Caco-2 (cell line): ENCODE measurements at regions of chr13 and their contacts with region 1.

Region 1: DNA sequence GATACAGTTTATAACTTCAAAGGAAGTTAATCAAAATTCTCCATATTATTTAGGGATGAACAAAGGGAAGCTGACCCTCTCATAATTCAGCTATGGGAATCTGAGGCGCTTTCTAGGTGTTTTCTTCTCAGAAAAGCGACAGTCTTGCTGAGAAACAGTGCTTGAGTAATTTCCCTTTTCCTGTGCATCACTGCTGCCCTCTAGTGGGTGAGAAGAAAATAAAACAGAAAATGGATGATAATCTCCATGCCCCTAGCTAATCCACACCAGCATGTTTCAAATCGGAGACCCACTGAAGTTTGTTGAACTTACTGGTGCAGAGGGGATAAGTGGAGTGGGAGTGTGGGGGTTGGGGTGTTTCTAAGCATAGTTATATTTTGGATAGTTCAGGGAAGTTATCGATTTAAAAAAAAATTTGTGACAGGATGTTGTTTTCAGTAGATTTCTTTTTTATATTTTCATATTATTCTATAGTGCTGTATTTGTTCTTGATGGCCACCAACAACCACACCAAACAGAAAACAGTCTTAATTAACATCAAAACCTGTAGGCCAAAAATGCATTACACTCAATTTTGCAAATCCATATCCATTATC is 21.4 kb downstream of the LCP1 start:
- DNase-seq: peak in 1 of 2 experiments; percentile 57
- H3K4me3 ChIP-seq: no peak overlapping the region
- H3K4me3 Mint-ChIP-seq: no peak overlapping the region
- H3K27ac Mint-ChIP-seq: no peak overlapping the region
- H3K4me1 ChIP-seq: no peaks in the 10 kb centered on the region
- H3K4me1 Mint-ChIP-seq: no peaks in the 10 kb centered on the region
- H3K27me3 ChIP-seq: no peaks in the 10 kb centered on the region
- H3K27me3 Mint-ChIP-seq: peaks cover 5% of the 10 kb centered on the region
- CTCF ChIP-seq: peak; percentile 77 to 91

Region 2: DNA sequence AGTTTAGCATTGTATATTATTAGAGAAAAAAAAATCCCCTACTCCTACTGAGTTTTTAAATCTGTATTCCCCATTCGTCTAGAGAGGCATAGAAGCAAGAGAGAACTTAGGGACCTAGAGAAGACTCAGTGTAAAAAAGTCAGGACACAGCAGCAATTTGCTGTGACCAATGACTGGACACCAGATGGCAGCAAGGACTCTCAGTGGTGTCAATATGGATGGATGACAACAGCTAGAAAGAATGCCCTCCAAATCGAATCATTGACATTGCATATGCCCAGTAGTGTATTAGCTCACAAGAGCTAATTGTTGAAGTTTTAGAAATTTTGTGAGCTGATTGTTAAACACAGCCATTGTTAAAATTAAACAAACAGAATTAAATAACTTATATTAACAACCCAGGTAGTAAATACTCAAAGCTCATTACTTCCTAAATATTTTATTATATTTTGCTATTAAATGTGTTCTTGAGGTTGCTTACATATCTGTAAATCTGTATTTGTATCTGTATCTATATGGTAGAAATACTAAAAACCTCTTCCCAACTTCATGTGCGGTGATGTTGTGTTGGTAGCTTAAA is 353.0 kb before region 1 on chr13:
- CTCF ChIA-PET with region 1: interaction called, 4 read pairs
- POLR2A ChIA-PET with region 1: no interaction called
- intact Hi-C with region 1: loop called (anchors 1 kb)
- DNase-seq: peak; percentile 61 to 63
- H3K4me3 ChIP-seq: no peak overlapping the region
- H3K4me3 Mint-ChIP-seq: no peak overlapping the region
- H3K27ac Mint-ChIP-seq: no peak overlapping the region
- H3K4me1 ChIP-seq: no peaks in the 10 kb centered on the region
- H3K4me1 Mint-ChIP-seq: no peaks in the 10 kb centered on the region
- H3K27me3 ChIP-seq: peaks cover 1% of the 10 kb centered on the region; the same call in 1 of the 2 replicates
- H3K27me3 Mint-ChIP-seq: peaks cover 9% of the 10 kb centered on the region
- CTCF ChIP-seq: peak; percentile 60 to 82

Region 3: GRCh38 chr13:46097015-46097644 is 63.4 kb before region 1 on chr13:
- CTCF ChIA-PET with region 1: no interaction called
- POLR2A ChIA-PET with region 1: no interaction called
- intact Hi-C with region 1: no loop called
- DNase-seq: no peak
- H3K4me3 ChIP-seq: no peak overlapping the region
- H3K4me3 Mint-ChIP-seq: no peak overlapping the region
- H3K27ac Mint-ChIP-seq: no peak overlapping the region
- H3K4me1 ChIP-seq: no peaks in the 10 kb centered on the region
- H3K4me1 Mint-ChIP-seq: peaks cover 6% of the 10 kb centered on the region
- H3K27me3 ChIP-seq: no peaks in the 10 kb centered on the region
- H3K27me3 Mint-ChIP-seq: peaks cover 10% of the 10 kb centered on the region
- CTCF ChIP-seq: no peak

Region 4: GRCh38 chr13:46126552-46127357 is 33.8 kb before region 1 on chr13:
- CTCF ChIA-PET with region 1: interaction called, 16 read pairs
- POLR2A ChIA-PET with region 1: no interaction called
- intact Hi-C with region 1: loop called (anchors 1 kb)
- DNase-seq: peak; percentile 74 to 83
- H3K4me3 ChIP-seq: no peak overlapping the region
- H3K4me3 Mint-ChIP-seq: no peak overlapping the region
- H3K27ac Mint-ChIP-seq: no peak overlapping the region
- H3K4me1 ChIP-seq: peaks cover 12% of the 10 kb centered on the region
- H3K4me1 Mint-ChIP-seq: peaks cover 7% of the 10 kb centered on the region
- H3K27me3 ChIP-seq: no peaks in the 10 kb centered on the region
- H3K27me3 Mint-ChIP-seq: no peaks in the 10 kb centered on the region
- CTCF ChIP-seq: peak; percentile 88 to 93

Region 5: DNA sequence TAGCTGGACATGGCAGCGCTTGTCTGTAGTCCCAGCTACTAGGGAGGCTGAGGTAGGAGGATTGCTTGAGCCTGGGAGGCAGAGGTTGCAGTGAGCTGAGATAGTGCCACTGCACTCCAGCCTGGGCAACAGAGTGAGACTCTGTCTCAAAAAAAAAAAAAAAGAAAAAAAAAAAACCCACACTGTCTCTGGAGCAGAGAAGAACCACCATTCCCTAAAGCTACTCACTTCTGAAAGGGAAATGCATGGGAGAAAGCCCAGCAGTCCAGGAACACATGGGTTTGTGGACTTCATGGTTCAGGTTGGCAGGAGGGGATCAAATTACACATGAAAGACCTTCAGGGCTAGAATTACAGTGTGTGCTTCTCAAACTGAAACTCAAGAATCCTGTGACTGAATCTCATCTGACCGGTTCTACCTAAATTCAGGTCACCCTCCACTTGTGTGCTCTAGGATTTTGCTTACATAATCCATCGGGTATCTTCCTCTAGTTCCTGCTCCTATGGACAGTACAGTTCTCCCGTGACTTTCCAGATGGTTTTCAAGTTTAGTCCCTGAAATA is 25.5 kb before region 1 on chr13:
- CTCF ChIA-PET with region 1: interaction called, 4 read pairs
- POLR2A ChIA-PET with region 1: no interaction called
- intact Hi-C with region 1: loop called (anchors 2 kb)
- DNase-seq: peak; percentile 80 to 84
- H3K4me3 ChIP-seq: no peak overlapping the region
- H3K4me3 Mint-ChIP-seq: peak overlapping the region; percentile 50
- H3K27ac Mint-ChIP-seq: peak overlapping the region; percentile 77
- H3K4me1 ChIP-seq: peaks cover 27% of the 10 kb centered on the region
- H3K4me1 Mint-ChIP-seq: peaks cover 35% of the 10 kb centered on the region
- H3K27me3 ChIP-seq: no peaks in the 10 kb centered on the region
- H3K27me3 Mint-ChIP-seq: no peaks in the 10 kb centered on the region
- CTCF ChIP-seq: no peak

Region 6: DNA sequence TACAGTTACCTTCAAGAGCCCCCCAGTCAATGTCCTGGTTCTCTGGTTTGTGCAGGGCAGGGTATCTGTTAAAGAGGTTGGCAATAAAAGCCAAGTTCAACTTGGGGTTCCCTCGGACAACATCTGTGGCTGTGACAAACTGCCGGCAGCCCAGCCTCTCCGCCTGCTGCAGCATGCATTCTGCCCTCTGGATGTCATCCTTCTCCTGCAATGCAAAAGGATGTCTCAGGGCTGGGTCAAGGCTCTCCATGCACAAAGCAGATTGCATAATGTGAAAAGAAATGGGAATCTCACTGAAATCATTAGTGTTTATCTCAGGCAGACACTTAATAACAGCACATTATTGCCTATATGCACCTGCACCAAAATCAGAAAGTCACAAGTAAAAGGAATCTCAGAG is 13.7 kb before region 1 on chr13:
- CTCF ChIA-PET with region 1: interaction called, 9 read pairs
- POLR2A ChIA-PET with region 1: no interaction called
- intact Hi-C with region 1: loop called (anchors 1 kb)
- DNase-seq: peak; percentile 58 to 63
- H3K4me3 ChIP-seq: no peak overlapping the region
- H3K4me3 Mint-ChIP-seq: no peak overlapping the region
- H3K27ac Mint-ChIP-seq: no peak overlapping the region
- H3K4me1 ChIP-seq: peaks cover 32% of the 10 kb centered on the region
- H3K4me1 Mint-ChIP-seq: peaks cover 29% of the 10 kb centered on the region
- H3K27me3 ChIP-seq: no peaks in the 10 kb centered on the region
- H3K27me3 Mint-ChIP-seq: no peaks in the 10 kb centered on the region
- CTCF ChIP-seq: peak; percentile 54 to 59

Region 7: GRCh38 chr13:46288570-46289259 is 128.1 kb after region 1 on chr13:
- CTCF ChIA-PET with region 1: interaction called, 4 read pairs
- POLR2A ChIA-PET with region 1: no interaction called
- intact Hi-C with region 1: loop called (anchors 5 kb)
- DNase-seq: peak in 1 of 2 experiments; percentile 61
- H3K4me3 ChIP-seq: no peak overlapping the region
- H3K4me3 Mint-ChIP-seq: no peak overlapping the region
- H3K27ac Mint-ChIP-seq: no peak overlapping the region
- H3K4me1 ChIP-seq: no peaks in the 10 kb centered on the region; the same call in 1 of the 2 replicates
- H3K4me1 Mint-ChIP-seq: no peaks in the 10 kb centered on the region
- H3K27me3 ChIP-seq: no peaks in the 10 kb centered on the region
- H3K27me3 Mint-ChIP-seq: no peaks in the 10 kb centered on the region
- CTCF ChIP-seq: peak; percentile 72 to 87

Region 8: DNA sequence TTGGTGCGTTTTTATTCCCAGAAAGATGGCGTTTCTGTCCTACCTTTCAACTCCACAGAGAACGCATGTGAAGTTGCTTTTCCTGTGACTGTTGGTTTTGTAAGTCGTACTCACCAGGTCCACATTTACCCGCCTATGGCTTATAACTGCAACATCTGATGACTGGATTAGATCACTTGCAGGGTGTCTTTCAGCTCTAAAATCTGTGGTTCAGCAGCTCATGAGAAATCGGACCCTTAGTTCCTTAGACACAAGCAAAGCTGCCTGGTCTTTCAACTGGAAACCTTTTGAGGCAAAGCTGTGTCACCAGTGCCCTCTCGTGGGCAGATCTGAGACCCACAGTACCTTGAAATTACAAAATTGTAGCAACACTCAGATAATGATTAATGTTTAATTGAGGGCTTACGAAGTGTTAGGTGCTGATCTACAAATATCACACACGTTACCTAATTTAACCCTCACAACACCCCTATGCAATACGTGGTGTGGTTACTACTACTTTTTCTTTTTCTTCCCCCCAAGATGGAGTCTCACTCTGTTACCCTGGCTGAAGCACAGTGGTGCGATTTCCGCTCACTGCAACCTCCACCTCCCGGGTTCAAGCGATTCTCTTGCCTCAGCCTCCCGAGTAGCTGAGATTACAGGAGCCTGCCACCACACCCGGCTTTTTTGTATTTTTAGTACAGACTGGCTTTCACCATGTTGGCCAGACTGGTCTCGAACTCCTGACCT is 161.1 kb after region 1 on chr13:
- CTCF ChIA-PET with region 1: no interaction called
- POLR2A ChIA-PET with region 1: no interaction called
- intact Hi-C with region 1: loop called (anchors 5 kb)
- DNase-seq: peak; percentile 56 to 61
- H3K4me3 ChIP-seq: no peak overlapping the region
- H3K4me3 Mint-ChIP-seq: no peak overlapping the region
- H3K27ac Mint-ChIP-seq: no peak overlapping the region
- H3K4me1 ChIP-seq: no peaks in the 10 kb centered on the region
- H3K4me1 Mint-ChIP-seq: no peaks in the 10 kb centered on the region
- H3K27me3 ChIP-seq: no peaks in the 10 kb centered on the region
- H3K27me3 Mint-ChIP-seq: no peaks in the 10 kb centered on the region
- CTCF ChIP-seq: peak; percentile 83 to 87

Region 9: GRCh38 chr13:46507981-46508380 is 347.4 kb after region 1 on chr13:
- CTCF ChIA-PET with region 1: no interaction called
- POLR2A ChIA-PET with region 1: no interaction called
- intact Hi-C with region 1: no loop called
- DNase-seq: no peak
- H3K4me3 ChIP-seq: no peak overlapping the region
- H3K4me3 Mint-ChIP-seq: no peak overlapping the region
- H3K27ac Mint-ChIP-seq: no peak overlapping the region
- H3K4me1 ChIP-seq: no peaks in the 10 kb centered on the region
- H3K4me1 Mint-ChIP-seq: no peaks in the 10 kb centered on the region
- H3K27me3 ChIP-seq: no peaks in the 10 kb centered on the region
- H3K27me3 Mint-ChIP-seq: no peaks in the 10 kb centered on the region
- CTCF ChIP-seq: no peak